ENCODE measurements at regions of chrX and their contacts with region 1.

Region 1: GRCh38 chrX:41084044-41084892 is 977 bp upstream of the USP9X start:
- DNase-seq: peak; percentile 99
- H3K4me3 ChIP-seq: peak overlapping the region; percentile 93
- H3K27ac ChIP-seq: peak overlapping the region; percentile 100
- H3K4me1 ChIP-seq: no peaks in the 10 kb centered on the region
- H3K27me3 ChIP-seq: peaks cover 5% of the 10 kb centered on the region
- CTCF ChIP-seq: no peak

Region 2: GRCh38 chrX:40735325-40736169 is 348.7 kb before region 1 on chrX and contains the start of gene MED14:
- intact Hi-C with region 1: loop called (anchors 10 kb)
- DNase-seq: peak; percentile 94
- H3K4me3 ChIP-seq: peak within 1 kb of the TSS; percentile 76
- H3K27ac ChIP-seq: peak within 1 kb of the TSS; percentile 90
- H3K4me1 ChIP-seq: no peaks in the 10 kb centered on the region
- H3K27me3 ChIP-seq: no peaks in the 10 kb centered on the region
- CTCF ChIP-seq: peak; percentile 49
- total RNA-seq, gene MED14: 59.1 to 63.0 TPM

Measured in colonic mucosa (tissue), 4 donors.